HEK293T (cell line): ENCODE measurements at regions of chr6 and their contacts with region 1.

Region 1: GRCh38 chr6:2988426-2989331 is 11.0 kb upstream of the NQO2 start:
- DNase-seq: peak; percentile 70

Region 2: DNA sequence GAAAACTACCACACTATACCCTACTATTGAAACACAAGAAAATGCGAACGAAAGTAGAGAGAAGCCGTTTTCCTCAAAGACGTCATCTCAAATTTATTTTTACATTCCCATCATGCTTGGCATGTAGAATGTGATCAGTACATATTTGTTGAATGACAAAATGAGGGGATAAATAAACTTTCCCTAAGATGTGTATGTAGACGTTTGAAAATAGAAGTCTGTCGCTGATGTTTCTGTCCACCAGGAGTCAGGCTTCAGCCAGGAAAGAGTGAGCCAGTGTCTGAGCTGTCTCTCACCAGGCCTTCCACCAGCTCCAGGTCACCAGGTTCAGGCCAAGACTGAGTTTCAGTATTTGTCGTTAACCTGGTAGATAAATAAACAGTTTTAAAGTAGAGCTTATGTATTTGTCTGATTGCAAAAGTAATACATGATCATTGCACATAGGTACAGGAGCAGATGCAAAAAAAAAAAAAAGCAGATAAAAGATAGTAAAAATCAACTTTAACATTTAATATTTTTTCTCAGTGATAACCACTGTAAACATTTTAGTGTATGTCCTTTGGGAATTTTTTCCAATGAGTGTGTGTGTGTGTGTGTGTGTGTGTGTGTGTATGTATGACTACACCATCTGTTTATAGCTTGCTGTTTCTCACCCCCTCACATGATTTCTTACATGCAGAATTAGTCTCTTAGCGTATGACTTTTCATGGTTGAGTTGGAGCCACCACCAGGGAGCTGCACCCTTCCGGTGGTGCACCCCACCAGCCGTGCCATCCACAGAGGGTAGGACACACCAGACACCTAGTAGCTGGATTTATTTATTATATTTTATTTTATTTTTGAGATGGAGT is 197.3 kb before region 1 on chr6:
- CTCF ChIA-PET with region 1: interaction called, 13 read pairs
- POLR2A ChIA-PET with region 1: interaction called, 4 read pairs
- DNase-seq: peak; percentile 72

Region 3: DNA sequence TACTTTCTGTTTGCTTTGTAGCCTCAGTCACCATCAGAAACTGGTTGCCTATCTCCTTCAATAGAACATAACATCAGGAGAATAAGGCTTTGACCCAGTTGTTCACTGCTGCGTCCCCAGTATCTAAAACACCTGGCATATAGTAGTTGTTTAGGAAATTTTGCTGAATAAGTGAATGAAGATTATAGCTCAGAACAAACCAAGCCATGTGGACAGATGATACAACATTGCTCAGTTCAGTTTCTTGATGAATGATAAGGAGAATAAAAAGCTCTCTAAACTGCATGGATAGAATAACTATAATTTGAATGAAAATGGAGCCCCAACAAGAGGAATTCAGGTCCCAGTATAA is 141.8 kb before region 1 on chr6:
- CTCF ChIA-PET with region 1: interaction called, 8 read pairs
- POLR2A ChIA-PET with region 1: interaction called, 19 read pairs
- DNase-seq: no peak

Region 4: GRCh38 chr6:2952557-2953095 is 36.1 kb before region 1 on chr6:
- CTCF ChIA-PET with region 1: interaction called, 64 read pairs
- POLR2A ChIA-PET with region 1: interaction called, 30 read pairs
- DNase-seq: peak; percentile 71

Region 5: GRCh38 chr6:2999618-3000557 is 11.2 kb after region 1 on chr6 and contains the start of gene NQO2:
- CTCF ChIA-PET with region 1: no interaction called
- POLR2A ChIA-PET with region 1: interaction called, 17 read pairs
- DNase-seq: peak; percentile 99